Activated T-helper 2 cell treated with anti-CD3 and anti-CD28 coated beads, Interferon-gamma antibody, Interleukin-2, Interleukin-4, amounts not matched to agents 10 μg/mL and 5 μg/mL and 100 μg/mL, durations not matched to agents 14 hours and 24 hours and 36 hours (primary cell): ENCODE measurements at regions of chr12 and their contacts with region 1.

Region 1: DNA sequence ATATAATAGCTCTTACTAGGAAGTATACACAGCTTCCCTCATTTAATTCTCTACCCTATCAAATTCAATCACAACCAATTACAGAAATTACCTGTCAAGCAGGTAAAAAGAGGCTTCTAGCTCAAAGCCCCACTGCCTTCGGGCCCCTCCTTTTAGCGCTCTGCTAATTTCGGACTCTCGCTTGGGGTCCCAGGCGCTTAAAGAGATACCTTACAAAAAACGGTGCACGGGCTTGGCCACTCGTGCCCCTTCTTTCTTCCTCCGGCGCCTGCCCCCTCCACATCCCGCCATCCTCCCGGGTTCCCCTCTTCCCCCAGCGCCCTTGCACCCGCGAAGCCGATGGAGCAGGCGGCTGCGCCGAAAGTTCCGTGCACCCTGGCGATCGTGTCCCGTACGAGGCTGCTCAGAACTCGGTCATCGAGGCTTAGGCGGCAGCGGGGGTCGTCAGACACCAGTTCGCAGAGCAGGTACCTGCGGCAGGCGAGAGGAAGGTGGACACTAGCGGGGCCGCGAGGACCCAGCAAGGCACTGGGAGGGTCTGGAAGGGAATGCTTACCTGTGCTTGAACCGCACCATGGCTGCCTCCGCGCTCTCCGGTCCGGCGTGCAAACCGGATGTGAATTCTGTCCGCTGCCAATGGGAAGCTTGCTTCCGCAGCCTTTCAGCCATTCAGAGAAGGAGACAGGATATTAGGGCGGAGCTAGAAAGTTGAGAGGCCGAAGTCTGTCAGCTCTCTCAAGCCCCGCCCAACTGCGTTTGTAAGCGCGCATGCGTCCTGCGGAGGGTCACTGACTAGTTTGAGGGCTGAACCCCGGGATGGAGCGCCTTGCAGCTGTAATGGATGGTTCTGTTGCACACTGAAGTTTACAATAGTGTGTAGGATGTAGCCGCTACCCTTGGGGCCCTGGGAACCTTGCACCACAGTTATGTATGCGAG is at the start of gene POP5:
- DNase-seq: peak; percentile 94
- H3K4me3 Mint-ChIP-seq: peak within 1 kb of the TSS; percentile 95
- H3K27ac Mint-ChIP-seq: peak within 1 kb of the TSS; percentile 83
- H3K4me1 Mint-ChIP-seq: peaks cover 31% of the 10 kb centered on the region
- H3K27me3 Mint-ChIP-seq: peaks cover 12% of the 10 kb centered on the region
- total RNA-seq, gene POP5: 64.3 and 65.7 TPM in 2 replicates

Region 2: DNA sequence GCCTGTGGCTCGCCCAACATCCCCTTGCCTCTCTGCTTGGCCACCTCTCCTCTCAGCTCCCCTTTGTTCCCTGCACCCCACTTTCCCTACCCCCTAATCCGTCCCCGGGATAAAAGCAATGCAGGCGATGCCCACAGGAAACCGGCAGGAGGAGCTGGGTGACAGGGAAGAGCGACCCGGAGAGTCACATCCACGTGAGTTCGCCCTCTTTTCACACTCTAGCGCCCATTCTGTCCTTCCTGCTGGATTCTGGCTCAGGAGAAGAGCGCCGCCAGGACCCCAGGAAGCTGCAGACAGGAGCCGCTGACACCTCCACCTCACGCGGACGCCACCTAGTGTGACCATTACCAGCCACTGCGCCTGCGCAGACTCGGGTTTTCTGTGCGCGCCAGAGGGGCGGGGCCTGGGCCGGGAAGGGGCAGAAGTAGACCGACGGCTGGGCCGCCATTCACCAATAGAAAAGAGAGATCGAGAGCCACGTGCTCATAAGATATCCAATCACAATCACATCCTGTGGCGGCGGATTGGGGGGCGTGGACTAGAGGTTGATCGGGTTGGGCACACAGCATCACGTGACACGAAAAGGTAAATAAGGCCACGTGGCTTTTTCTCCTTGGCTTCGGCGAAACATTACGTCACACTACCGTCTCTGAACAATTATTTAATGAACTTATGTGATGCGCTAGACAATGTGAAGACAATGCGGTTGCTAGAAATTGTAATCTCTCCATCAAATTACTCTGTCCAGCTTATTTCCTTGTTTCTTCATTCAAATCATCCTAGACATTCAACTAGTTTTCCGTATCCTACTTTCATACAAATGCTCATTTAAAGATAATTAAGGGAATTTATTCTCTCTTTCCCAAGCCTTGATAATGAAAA is 263.6 kb before region 1 on chr12:
- intact Hi-C with region 1: loop called (anchors 10 kb)
- DNase-seq: peak; percentile 100
- H3K4me3 Mint-ChIP-seq: peak overlapping the region; percentile 95
- H3K27ac Mint-ChIP-seq: peak overlapping the region; percentile 96
- H3K4me1 Mint-ChIP-seq: peaks cover 11% of the 10 kb centered on the region
- H3K27me3 Mint-ChIP-seq: peaks cover 4% of the 10 kb centered on the region

Region 3: DNA sequence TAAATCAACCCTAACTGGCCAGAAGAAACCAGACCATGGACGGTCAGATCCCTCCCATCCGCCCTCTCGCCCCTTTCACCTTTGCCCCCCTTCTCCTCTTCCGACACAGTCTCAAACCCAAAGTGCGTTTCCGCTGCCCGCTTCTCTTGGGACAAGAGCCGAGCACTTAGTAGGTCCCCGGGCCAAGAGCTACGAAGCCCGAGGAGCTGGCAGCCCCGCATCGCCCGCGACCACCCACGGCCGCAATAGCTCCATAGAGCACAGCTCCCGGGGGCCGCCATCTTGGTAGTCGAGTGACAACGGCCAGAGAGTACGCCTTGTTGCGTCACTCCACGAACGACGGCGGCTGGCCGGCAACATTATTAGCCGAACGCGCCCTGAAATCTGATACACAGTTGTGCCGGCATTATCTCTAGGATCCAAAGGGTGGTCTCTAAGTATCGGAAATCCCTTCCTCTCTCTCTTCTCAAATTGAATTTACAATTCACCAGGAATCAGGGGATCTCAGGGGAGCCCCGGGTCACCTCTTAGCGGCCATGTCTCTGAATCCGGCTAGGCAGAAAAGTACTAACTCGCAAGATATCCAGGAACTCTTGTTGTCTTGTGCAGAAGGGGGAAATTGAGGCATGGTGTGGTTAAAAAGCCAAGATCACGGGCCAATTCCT is 52.1 kb before region 1 on chr12 and contains the start of gene COQ5:
- intact Hi-C with region 1: loop called (anchors 2 kb)
- DNase-seq: peak; percentile 76
- H3K4me3 Mint-ChIP-seq: peak within 1 kb of the TSS; percentile 99
- H3K27ac Mint-ChIP-seq: peak within 1 kb of the TSS; percentile 99
- H3K4me1 Mint-ChIP-seq: peaks cover 15% of the 10 kb centered on the region
- H3K27me3 Mint-ChIP-seq: no peaks in the 10 kb centered on the region
- total RNA-seq, gene COQ5: 29.3 and 29.9 TPM in 2 replicates

Region 4: GRCh38 chr12:120649442-120650232 is 68.6 kb after region 1 on chr12:
- intact Hi-C with region 1: loop called (anchors 2 kb)
- DNase-seq: no peak
- H3K4me3 Mint-ChIP-seq: peak overlapping the region; percentile 27
- H3K27ac Mint-ChIP-seq: no peak overlapping the region
- H3K4me1 Mint-ChIP-seq: peaks cover 13% of the 10 kb centered on the region
- H3K27me3 Mint-ChIP-seq: peaks cover 53% of the 10 kb centered on the region

Region 5: GRCh38 chr12:120710031-120710804 is 129.2 kb after region 1 on chr12 and contains the start of gene UNC119B:
- intact Hi-C with region 1: loop called (anchors 1 kb)
- DNase-seq: peak; percentile 66
- H3K4me3 Mint-ChIP-seq: peak within 1 kb of the TSS; percentile 88
- H3K27ac Mint-ChIP-seq: peak within 1 kb of the TSS; percentile 82
- H3K4me1 Mint-ChIP-seq: peaks cover 29% of the 10 kb centered on the region
- H3K27me3 Mint-ChIP-seq: no peaks in the 10 kb centered on the region
- total RNA-seq, gene UNC119B: 25.1 and 27.0 TPM in 2 replicates

Region 6: DNA sequence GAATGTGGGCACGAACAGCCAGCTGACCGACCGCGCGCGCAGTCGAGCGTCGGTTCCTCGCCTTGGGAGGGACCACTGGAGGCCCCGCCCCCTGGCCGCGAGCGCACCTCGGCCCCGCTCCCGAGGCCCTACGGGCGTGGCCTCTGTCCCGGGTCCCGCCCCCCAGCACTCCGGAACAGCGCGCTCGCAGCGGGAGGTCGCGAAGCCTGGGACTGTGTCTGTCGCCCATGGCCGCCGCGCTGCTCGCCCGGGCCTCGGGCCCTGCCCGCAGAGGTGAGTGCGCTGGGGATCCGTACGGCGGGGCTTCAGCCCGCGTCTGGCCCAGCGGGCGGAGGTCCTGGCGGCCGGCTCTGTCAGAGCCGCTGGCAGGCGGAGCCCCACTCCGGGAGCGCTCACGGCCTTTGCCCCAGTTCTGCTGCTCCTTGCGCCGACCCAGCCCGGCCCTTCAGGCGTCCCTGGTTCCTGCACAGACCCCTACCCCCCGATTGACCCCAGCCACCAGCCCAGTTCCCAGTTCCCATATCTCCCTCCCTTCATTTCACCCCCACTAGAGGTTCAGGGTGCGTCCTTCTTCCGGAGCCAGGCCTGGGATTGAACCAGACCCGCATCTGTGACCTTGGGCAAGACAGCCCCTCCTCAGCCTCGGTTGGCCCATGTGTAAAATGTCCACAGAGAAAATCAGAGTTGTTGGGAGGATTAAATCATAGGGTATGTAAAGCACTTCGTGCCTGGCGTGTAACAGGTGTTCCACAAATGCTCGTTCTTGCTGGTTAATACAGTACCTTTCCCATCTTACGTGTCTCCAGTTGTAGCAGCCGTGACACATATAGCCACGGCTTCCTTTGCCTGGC is 144.8 kb after region 1 on chr12 and contains the start of gene ACADS:
- intact Hi-C with region 1: loop called (anchors 1 kb)
- DNase-seq: peak; percentile 87
- H3K4me3 Mint-ChIP-seq: peak within 1 kb of the TSS; percentile 96
- H3K27ac Mint-ChIP-seq: peak within 1 kb of the TSS; percentile 79
- H3K4me1 Mint-ChIP-seq: peaks cover 20% of the 10 kb centered on the region
- H3K27me3 Mint-ChIP-seq: no peaks in the 10 kb centered on the region
- total RNA-seq, gene ACADS: 16.4 and 16.6 TPM in 2 replicates

Region 7: DNA sequence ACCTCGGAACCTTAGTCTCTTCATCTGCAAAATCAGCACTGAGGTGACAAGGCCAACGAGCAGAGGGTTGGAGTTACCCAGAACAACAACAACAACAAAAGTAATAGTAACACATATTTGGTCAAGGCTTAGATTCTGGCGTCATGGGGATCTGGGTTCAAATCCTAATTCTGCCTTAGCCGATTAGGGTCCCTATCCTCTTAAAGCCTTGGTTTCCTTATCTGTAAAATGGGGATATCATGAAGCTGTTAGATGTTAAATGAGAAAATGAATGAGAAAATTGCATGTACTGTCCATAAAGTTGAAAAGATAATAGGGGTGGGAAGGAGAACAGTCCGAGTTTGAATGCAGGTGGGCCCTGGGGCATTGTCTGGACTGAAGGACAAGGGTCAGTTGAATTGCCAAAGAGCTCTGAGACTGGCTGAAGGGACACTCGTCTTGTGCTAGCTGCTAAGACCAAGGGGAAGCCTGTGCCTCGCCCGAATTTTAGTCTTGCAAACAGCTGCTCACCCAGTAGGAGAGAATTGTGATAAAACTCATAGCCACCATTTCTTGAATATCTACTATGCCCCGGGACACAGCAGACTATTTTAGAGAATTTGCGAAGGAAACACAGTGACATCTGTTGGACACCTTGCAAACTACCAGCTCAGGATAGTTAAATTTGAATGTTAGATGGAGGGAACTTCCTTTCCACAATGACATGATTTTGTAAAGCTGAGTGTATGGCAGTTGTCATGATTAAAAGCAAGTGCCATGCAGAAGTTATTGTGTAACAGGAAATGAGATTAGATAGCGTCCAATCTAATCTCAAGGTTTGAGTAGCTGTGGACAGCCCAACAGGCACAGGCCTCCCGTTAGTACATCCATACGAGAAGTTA is 390.5 kb after region 1 on chr12:
- intact Hi-C with region 1: loop called (anchors 5 kb)
- DNase-seq: peak; percentile 24
- H3K4me3 Mint-ChIP-seq: no peak overlapping the region
- H3K27ac Mint-ChIP-seq: no peak overlapping the region
- H3K4me1 Mint-ChIP-seq: peaks cover 5% of the 10 kb centered on the region
- H3K27me3 Mint-ChIP-seq: no peaks in the 10 kb centered on the region